ENCODE measurements at regions of chr2 and their contacts with region 1.

Region 1: GRCh38 chr2:26396734-26397298 is 4.9 kb upstream of the DRC1 start:
- DNase-seq: peak; percentile 55 to 80 (median 58)
- ATAC-seq: peak; percentile 85
- H3K4me3 ChIP-seq: no peak overlapping the region
- H3K27ac ChIP-seq: peak overlapping the region; percentile 13; the same call in 1 of the 3 replicates
- H3K4me1 ChIP-seq: peaks cover 10 to 24% of the 10 kb centered on the region in 2 experiments
- H3K27me3 ChIP-seq: no peaks in the 10 kb centered on the region
- CTCF ChIP-seq: no peak
- EP300 ChIP-seq: peak; percentile 68
- POLR2A ChIP-seq: no peak
- RAD21 ChIP-seq: no peak

Region 2: GRCh38 chr2:26382564-26382963 is 14.3 kb before region 1 on chr2:
- CTCF ChIA-PET with region 1: no interaction called
- POLR2A ChIA-PET with region 1: interaction called, 13 read pairs
- in situ Hi-C with region 1: no loop called
- intact Hi-C with region 1: no loop called
- DNase-seq: no peak
- ATAC-seq: no peak
- H3K4me3 ChIP-seq: no peak overlapping the region
- H3K27ac ChIP-seq: no peak overlapping the region
- H3K4me1 ChIP-seq: peaks cover 0 to 2% of the 10 kb centered on the region in 2 experiments; a peak in 1 of 5 replicates
- H3K27me3 ChIP-seq: no peaks in the 10 kb centered on the region
- CTCF ChIP-seq: no peak
- EP300 ChIP-seq: no peak
- POLR2A ChIP-seq: peak; percentile 25; the same call in 1 of the 2 replicates
- RAD21 ChIP-seq: no peak

Region 3: GRCh38 chr2:26412091-26412673 is 15.4 kb after region 1 on chr2:
- CTCF ChIA-PET with region 1: interaction called, 3 read pairs
- POLR2A ChIA-PET with region 1: interaction called, 16 read pairs
- in situ Hi-C with region 1: no loop called
- intact Hi-C with region 1: no loop called
- DNase-seq: peak; percentile 79 to 92 (median 85)
- ATAC-seq: peak; percentile 94
- H3K4me3 ChIP-seq: peak overlapping the region; percentile 30
- H3K27ac ChIP-seq: peak overlapping the region; percentile 95
- H3K4me1 ChIP-seq: peaks cover 7 to 18% of the 10 kb centered on the region in 2 experiments; a peak in 4 of 5 replicates
- H3K27me3 ChIP-seq: no peaks in the 10 kb centered on the region
- CTCF ChIP-seq: peak in 1 of 3 experiments; percentile 6; a peak in 1 of 6 replicates
- EP300 ChIP-seq: peak; percentile 83
- POLR2A ChIP-seq: peak; percentile 87
- RAD21 ChIP-seq: no peak; a peak in 1 of 4 replicates

Region 4: GRCh38 chr2:26462511-26463243 is 65.9 kb after region 1 on chr2:
- CTCF ChIA-PET with region 1: no interaction called
- POLR2A ChIA-PET with region 1: no interaction called
- in situ Hi-C with region 1: no loop called
- intact Hi-C with region 1: loop called (anchors 5 kb)
- DNase-seq: peak; percentile 71 to 74 (median 72)
- ATAC-seq: peak; percentile 81
- H3K4me3 ChIP-seq: no peak overlapping the region
- H3K27ac ChIP-seq: no peak overlapping the region
- H3K4me1 ChIP-seq: peaks cover 13 to 38% of the 10 kb centered on the region in 2 experiments; a peak in 4 of 5 replicates
- H3K27me3 ChIP-seq: no peaks in the 10 kb centered on the region
- CTCF ChIP-seq: peak; percentile 83 to 91 (median 90)
- EP300 ChIP-seq: no peak
- POLR2A ChIP-seq: no peak
- RAD21 ChIP-seq: peak; percentile 58 to 80; a peak in 3 of 4 replicates

Measured in K562 (cell line).